Left cardiac atrium (tissue), 4 donors: ENCODE measurements at regions of chr7 and their contacts with region 1.

Region 1: GRCh38 chr7:44123190-44124003 is at the start of gene POLD2:
- DNase-seq: peak; percentile 99
- ATAC-seq: peak; percentile 98 to 99
- total RNA-seq, gene POLD2: 95.8 to 98.9 TPM

Region 2: GRCh38 chr7:43824963-43825362 is 298.4 kb before region 1 on chr7:
- intact Hi-C with region 1: no loop called
- DNase-seq: no peak
- ATAC-seq: no peak

Region 3: GRCh38 chr7:43977525-43977924 is 145.9 kb before region 1 on chr7:
- intact Hi-C with region 1: no loop called
- DNase-seq: no peak
- ATAC-seq: no peak

Region 4: DNA sequence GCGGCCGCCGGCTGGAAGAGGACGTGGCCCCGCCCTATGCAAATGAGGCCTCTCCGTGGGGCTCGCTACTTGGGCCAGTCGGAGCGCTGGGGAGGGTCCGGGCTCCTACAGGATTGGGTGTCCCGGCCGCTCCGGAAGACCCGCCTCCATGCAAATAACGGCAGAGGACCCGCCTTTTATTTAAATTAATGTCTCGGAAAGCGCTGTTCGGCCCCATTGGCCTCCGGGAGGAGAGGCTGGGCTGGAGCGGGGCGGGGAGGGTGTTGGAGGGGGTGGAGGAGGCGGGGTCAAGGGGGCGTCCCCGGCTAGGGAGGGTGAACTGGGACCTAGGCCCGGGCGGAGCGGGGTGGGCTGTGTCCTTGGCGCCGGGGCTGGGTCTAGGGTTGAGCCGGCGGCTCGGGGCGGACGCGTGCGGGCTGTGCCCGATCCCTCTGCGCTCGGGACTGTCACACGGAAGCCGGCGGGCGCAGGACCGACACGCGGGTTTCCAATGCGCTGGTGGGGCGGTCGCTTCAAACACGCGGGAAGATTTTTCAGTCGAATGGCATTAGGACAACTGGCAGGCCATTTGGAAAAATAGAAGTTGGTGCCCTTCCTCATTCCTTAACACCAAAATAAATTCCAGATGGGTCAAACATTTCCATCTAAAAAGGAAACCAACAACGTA is 40.7 kb before region 1 on chr7:
- intact Hi-C with region 1: loop called (anchors 5 kb)
- DNase-seq: peak; percentile 100
- ATAC-seq: peak; percentile 94 to 97